Upper lobe of right lung (tissue), 1 donor: ENCODE measurements at regions of chr1 and their contacts with region 1.

Region 1: GRCh38 chr1:182391362-182392044 is at the start of gene GLUL:
- DNase-seq: peak; percentile 99
- ATAC-seq: peak; percentile 91
- H3K4me3 ChIP-seq: peak within 1 kb of the TSS; percentile 94
- H3K27ac ChIP-seq: peak within 1 kb of the TSS; percentile 99
- H3K4me1 ChIP-seq: peaks cover 44% of the 10 kb centered on the region
- H3K27me3 ChIP-seq: no peaks in the 10 kb centered on the region
- CTCF ChIP-seq: peak; percentile 11
- total RNA-seq, gene GLUL: 1,001 TPM

Region 2: GRCh38 chr1:182084487-182085316 is 306.8 kb before region 1 on chr1:
- intact Hi-C with region 1: loop called (anchors 5 kb)
- DNase-seq: peak; percentile 88
- ATAC-seq: peak; percentile 93
- H3K4me3 ChIP-seq: no peak overlapping the region
- H3K27ac ChIP-seq: peak overlapping the region; percentile 58
- H3K4me1 ChIP-seq: peaks cover 12% of the 10 kb centered on the region
- H3K27me3 ChIP-seq: no peaks in the 10 kb centered on the region
- CTCF ChIP-seq: peak; percentile 84